Mammary epithelial cell (primary cell): ENCODE measurements at regions of chr9 and their contacts with region 1.

Region 1: DNA sequence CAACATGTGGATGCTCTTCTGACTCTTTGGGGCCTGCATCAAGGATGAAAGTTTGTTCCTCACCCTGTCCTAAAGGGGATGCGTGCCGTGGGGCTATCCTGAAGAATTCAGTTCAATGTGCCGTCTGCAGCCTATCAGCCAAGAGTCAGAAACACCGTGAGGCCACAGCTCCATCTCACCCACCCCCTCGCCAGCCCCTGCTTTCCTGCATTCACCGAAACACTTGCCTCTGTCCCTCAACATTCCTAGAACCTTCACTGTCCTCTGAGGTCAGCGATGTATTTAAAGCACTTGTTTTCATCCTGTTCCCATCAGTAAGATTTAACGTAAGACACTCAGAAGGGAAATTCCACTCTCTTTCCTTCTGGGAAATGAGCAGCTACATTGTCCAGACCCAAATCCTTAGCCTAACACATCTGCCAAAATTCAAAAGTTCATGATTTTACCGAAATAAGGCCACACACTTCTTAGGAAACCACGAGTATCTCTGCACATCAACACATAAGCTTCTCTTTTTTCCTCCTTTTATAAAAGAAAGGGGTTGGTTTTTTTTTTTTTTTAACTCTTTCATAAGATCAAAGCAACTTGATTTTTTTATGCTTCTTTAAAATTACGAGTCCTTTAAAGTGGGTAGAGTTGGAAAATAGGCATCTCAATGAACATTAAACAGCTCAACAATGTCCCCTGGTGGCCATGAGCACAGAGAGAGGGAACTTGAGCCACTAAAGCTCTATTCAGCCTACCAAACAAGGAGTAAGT is 100.7 kb downstream of the SUSD1 start:
- DNase-seq: peak; percentile 62
- H3K4me3 ChIP-seq: no peak overlapping the region
- H3K27ac ChIP-seq: peak overlapping the region; percentile 2
- H3K4me1 ChIP-seq: peaks cover 14% of the 10 kb centered on the region
- H3K27me3 ChIP-seq: no peaks in the 10 kb centered on the region
- CTCF ChIP-seq: peak; percentile 98 to 99

Region 2: DNA sequence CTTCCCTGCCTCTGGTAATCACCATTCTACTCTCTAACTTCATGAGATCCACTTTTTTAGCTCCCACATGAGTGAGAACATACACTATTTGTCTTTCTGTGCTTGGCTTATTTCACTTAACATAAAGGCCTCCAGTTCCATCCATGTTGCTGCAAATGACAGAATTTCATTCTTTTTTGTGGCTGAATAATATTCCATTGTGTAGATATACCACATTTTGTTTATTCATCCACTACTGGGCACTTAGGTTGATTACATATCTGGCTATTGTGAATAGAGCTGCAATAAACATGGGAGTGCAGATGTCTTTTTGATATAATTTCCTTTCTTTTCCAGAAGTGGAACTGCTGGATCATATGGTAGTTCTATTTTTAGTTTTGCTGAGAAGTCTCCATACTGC is 308.4 kb before region 1 on chr9:
- CTCF ChIA-PET with region 1: no interaction called
- dilution Hi-C with region 1: loop called (anchors 5 kb)
- in situ Hi-C with region 1: loop called in 1 of 2 experiments (anchors 5 kb)
- intact Hi-C with region 1: no loop called
- DNase-seq: no peak
- H3K4me3 ChIP-seq: no peak overlapping the region
- H3K27ac ChIP-seq: no peak overlapping the region
- H3K4me1 ChIP-seq: no peaks in the 10 kb centered on the region
- H3K27me3 ChIP-seq: no peaks in the 10 kb centered on the region
- CTCF ChIP-seq: no peak

Region 3: GRCh38 chr9:111828193-111828592 is 246.2 kb before region 1 on chr9:
- CTCF ChIA-PET with region 1: no interaction called
- dilution Hi-C with region 1: no loop called
- in situ Hi-C with region 1: no loop called
- intact Hi-C with region 1: loop called (anchors 1 kb)
- DNase-seq: no peak
- H3K4me3 ChIP-seq: no peak overlapping the region
- H3K27ac ChIP-seq: no peak overlapping the region
- H3K4me1 ChIP-seq: peaks cover 18% of the 10 kb centered on the region
- H3K27me3 ChIP-seq: no peaks in the 10 kb centered on the region
- CTCF ChIP-seq: peak in 1 of 2 donors; percentile 27

Region 4: GRCh38 chr9:111957856-111958652 is 116.4 kb before region 1 on chr9:
- CTCF ChIA-PET with region 1: interaction called, 9 read pairs
- dilution Hi-C with region 1: no loop called
- in situ Hi-C with region 1: loop called in 1 of 2 experiments (anchors 25 kb)
- intact Hi-C with region 1: loop called (anchors 1 kb)
- DNase-seq: peak; percentile 96
- H3K4me3 ChIP-seq: peak overlapping the region; percentile 0 to 14 (median 10)
- H3K27ac ChIP-seq: peak overlapping the region; percentile 96
- H3K4me1 ChIP-seq: peaks cover 43% of the 10 kb centered on the region
- H3K27me3 ChIP-seq: no peaks in the 10 kb centered on the region
- CTCF ChIP-seq: no peak

Region 5: DNA sequence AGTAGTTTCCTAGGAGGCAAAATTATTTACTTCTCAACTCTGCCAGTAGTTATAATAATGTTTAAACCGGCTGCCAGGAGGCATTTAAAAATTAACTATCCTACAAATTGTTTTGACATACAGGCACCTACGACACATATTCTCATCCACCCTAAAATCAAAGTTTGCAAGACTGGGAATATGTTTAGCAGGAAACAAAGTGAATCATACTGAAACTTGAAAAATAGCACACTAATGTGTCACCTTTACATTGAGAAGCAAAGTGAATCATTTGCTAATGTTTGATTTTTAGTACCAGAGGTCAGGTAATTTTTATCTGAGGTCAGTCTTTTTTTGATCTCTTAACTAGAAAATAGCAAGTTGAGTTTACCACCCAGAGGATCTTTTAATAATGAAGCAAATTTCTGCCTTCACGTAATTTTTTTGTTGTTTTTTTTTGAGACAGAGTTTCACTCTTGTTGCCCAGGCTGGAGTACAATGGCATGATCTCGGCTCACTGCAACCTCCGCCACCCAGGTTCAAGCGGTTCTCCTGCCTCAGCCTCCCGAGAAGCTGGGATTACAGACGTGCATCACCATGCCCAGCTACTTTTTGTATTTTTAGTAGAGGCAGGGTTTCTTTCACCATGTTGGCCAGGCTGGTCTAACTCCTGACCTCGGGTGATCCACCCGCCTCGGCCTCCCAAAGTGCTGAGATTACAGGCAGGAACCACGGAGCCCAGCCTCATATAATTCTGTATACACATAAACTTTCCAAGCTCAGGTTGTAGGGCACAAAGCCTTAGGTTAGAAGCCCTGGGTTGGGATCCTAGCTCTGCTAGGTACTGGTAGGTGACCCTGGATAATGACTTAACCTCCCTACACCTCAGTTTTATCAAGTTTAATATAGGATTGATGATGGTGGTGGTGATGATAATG is 53.5 kb before region 1 on chr9:
- CTCF ChIA-PET with region 1: no interaction called
- dilution Hi-C with region 1: no loop called
- in situ Hi-C with region 1: no loop called
- intact Hi-C with region 1: loop called (anchors 2 kb)
- DNase-seq: peak; percentile 89
- H3K4me3 ChIP-seq: no peak overlapping the region
- H3K27ac ChIP-seq: peak overlapping the region; percentile 89
- H3K4me1 ChIP-seq: peaks cover 14% of the 10 kb centered on the region
- H3K27me3 ChIP-seq: no peaks in the 10 kb centered on the region
- CTCF ChIP-seq: no peak

Region 6: DNA sequence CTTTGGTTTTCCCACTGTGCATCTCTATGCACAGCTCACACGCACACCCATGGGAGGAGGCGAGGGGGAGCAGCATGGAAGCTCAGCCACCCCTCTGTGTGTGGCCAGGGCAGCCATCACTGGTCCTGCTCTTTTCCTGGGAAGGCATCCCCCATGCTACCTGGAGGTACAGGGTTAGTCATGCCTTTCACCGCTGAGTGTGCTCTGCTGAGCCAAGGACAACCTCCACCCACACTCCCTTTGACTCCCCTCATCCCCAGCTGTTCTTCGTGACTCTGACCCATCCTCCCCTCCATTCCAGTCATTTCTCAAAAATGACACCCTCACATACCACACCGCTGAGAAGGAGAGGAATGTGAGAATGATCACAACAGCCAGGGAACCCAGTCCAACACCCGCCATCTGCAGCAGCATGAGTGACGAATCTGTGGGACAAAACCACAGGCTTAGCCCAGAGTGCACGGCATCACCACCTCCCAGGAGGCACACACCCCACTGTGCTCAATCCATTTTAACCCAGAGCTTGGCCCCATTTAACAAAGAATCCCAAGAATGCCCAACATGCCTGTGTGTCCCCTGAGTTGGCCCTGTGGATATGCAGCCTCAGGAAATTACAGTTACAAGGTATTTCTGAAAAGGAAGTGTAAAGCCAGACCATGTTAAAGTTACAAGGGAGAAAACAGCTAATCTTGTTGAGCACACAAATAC is 32.7 kb before region 1 on chr9:
- CTCF ChIA-PET with region 1: no interaction called
- dilution Hi-C with region 1: no loop called
- in situ Hi-C with region 1: no loop called
- intact Hi-C with region 1: loop called (anchors 2 kb)
- DNase-seq: peak; percentile 99
- H3K4me3 ChIP-seq: no peak overlapping the region
- H3K27ac ChIP-seq: peak overlapping the region; percentile 52
- H3K4me1 ChIP-seq: peaks cover 60% of the 10 kb centered on the region
- H3K27me3 ChIP-seq: no peaks in the 10 kb centered on the region
- CTCF ChIP-seq: no peak